HepG2 (cell line): ENCODE measurements at regions of chr15 and their contacts with region 1.

Region 1: GRCh38 chr15:82749951-82750830 is 40.5 kb upstream of the AP3B2 start:
- DNase-seq: peak; percentile 95
- ATAC-seq: peak; percentile 99
- H3K4me3 ChIP-seq: peak overlapping the region; percentile 80 to 87 (median 84)
- H3K27ac ChIP-seq: peak overlapping the region; percentile 89
- H3K4me1 ChIP-seq: peaks cover 38% of the 10 kb centered on the region
- H3K27me3 ChIP-seq: peaks cover 0 to 3% of the 10 kb centered on the region in 2 experiments; a peak in 1 of 5 replicates
- CTCF ChIP-seq: no peak
- EP300 ChIP-seq: 0 out of 4 replicates have a peak, but pooled peaks of 1 of the 2 experiments have one; percentile 2
- POLR2A ChIP-seq: peak; percentile 93 to 97
- RAD21 ChIP-seq: no peak; the same call in 1 of the 2 replicates

Region 2: DNA sequence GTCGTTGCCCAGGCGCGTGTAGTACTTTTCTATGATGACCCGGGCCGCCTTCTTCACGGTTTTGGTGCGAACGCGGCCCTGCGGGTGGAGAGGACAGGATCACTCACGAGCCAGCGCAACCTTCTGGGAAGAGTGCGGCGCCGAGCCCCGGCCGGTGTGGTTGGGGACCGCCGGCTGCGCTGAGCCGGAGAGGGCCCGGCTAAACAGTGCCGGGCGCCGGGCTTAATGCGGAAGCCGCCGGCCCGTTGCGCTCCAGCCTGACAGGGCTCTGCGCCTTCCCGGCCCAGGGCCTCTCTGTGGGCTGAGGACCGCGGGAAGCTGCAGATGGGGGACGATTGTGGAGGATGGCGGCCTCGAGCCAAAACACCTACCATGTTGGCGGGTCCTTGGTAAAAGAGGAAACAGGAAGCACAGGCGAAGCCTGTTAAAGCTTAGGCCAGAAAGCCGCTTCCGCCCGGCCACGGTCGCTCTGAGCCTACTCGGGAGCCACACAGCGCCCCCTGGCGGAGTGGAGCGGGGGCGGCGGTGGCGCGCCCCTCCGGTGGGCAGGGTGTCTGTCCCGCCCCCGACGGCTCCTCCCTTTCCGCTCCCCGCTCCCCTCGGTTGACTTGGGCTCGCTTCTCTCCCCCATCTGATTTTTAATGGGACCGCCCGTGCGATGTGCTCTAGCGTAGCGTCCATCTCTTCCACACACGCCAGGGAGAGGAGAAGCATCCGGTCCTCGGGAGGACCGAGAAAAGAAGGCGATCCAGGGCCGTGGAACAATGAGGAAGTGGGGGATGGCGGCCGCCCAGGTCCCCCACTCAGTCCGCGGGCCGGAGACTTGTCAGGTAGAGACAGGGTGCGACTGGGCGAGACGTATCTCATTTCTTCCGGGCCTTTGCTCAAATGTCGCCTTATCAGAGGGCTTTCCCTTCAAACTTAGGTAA is 209.9 kb before region 1 on chr15 and contains the start of gene RPS17:
- CTCF ChIA-PET with region 1: no interaction called
- POLR2A ChIA-PET with region 1: interaction called, 25 read pairs
- in situ Hi-C with region 1: no loop called
- intact Hi-C with region 1: loop called (anchors 1 kb)
- DNase-seq: peak; percentile 88
- ATAC-seq: peak; percentile 90
- H3K4me3 ChIP-seq: peak within 1 kb of the TSS; percentile 98 to 100 (median 98)
- H3K27ac ChIP-seq: peak within 1 kb of the TSS; percentile 90
- H3K4me1 ChIP-seq: peaks cover 41% of the 10 kb centered on the region
- H3K27me3 ChIP-seq: peaks cover 0 to 10% of the 10 kb centered on the region in 2 experiments; a peak in 1 of 5 replicates
- CTCF ChIP-seq: peak; percentile 98
- EP300 ChIP-seq: peak; percentile 21 to 44; a peak in 1 of 4 replicates
- POLR2A ChIP-seq: peak; percentile 95 to 99
- RAD21 ChIP-seq: peak; percentile 67
- total RNA-seq, gene RPS17: 2,570 and 3,054 TPM in 2 replicates

Region 3: GRCh38 chr15:82763361-82764116 is 13.3 kb after region 1 on chr15:
- CTCF ChIA-PET with region 1: no interaction called
- POLR2A ChIA-PET with region 1: interaction called, 22 read pairs
- in situ Hi-C with region 1: no loop called
- intact Hi-C with region 1: no loop called
- DNase-seq: peak; percentile 86
- ATAC-seq: peak; percentile 95
- H3K4me3 ChIP-seq: peak overlapping the region in 2 of 3 experiments; percentile 16 to 39; a peak in 3 of 6 replicates
- H3K27ac ChIP-seq: peak overlapping the region; percentile 63
- H3K4me1 ChIP-seq: peaks cover 43% of the 10 kb centered on the region
- H3K27me3 ChIP-seq: no peaks in the 10 kb centered on the region
- CTCF ChIP-seq: no peak
- EP300 ChIP-seq: peak in 1 of 2 experiments; percentile 64; a peak in 1 of 4 replicates
- POLR2A ChIP-seq: peak in 1 of 2 experiments; percentile 41; a peak in 1 of 4 replicates
- RAD21 ChIP-seq: no peak

Region 4: DNA sequence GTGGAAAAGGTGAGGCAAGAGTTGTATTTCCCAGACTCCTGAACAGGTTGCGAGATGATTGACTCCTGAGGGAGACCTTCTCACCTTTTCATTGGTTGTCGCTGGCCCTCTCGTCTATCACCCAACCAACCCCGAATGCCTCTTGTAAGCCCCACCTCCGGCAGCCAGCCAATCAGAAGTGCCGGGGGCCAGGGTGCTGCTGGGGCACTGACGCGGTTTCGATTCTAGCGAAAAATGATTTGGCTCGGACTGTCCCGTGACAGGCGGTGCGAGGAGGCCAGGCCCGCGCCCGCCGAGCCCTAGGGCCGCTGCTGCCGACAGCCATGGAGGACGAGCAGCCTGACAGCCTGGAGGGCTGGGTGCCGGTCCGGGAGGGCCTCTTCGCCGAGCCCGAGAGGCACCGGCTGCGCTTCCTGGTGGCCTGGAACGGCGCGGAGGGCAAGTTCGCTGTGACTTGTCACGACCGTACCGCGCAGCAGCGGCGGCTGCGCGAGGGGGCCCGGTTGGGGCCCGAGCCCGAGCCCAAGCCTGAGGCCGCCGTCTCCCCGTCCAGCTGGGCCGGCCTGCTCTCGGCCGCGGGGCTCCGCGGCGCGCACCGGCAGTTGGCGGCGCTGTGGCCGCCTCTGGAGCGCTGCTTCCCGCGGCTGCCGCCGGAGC is 59.3 kb after region 1 on chr15 and contains the start of gene WHAMM:
- CTCF ChIA-PET with region 1: no interaction called
- POLR2A ChIA-PET with region 1: interaction called, 26 read pairs
- in situ Hi-C with region 1: no loop called
- intact Hi-C with region 1: loop called (anchors 2 kb)
- DNase-seq: peak; percentile 98
- ATAC-seq: peak; percentile 95
- H3K4me3 ChIP-seq: peak within 1 kb of the TSS; percentile 64 to 85 (median 84)
- H3K27ac ChIP-seq: peak within 1 kb of the TSS; percentile 97
- H3K4me1 ChIP-seq: peaks cover 31% of the 10 kb centered on the region
- H3K27me3 ChIP-seq: no peaks in the 10 kb centered on the region; a peak in 2 of 5 replicates
- CTCF ChIP-seq: peak; percentile 24
- EP300 ChIP-seq: no peak
- POLR2A ChIP-seq: peak; percentile 82 to 84
- RAD21 ChIP-seq: peak; percentile 35; the same call in 1 of the 2 replicates
- total RNA-seq, gene WHAMM: 2.7 and 2.9 TPM in 2 replicates

Region 5: GRCh38 chr15:82855286-82856100 is 105.3 kb after region 1 on chr15:
- CTCF ChIA-PET with region 1: no interaction called
- POLR2A ChIA-PET with region 1: interaction called, 10 read pairs
- in situ Hi-C with region 1: no loop called
- intact Hi-C with region 1: no loop called
- DNase-seq: no peak
- ATAC-seq: no peak
- H3K4me3 ChIP-seq: no peak overlapping the region
- H3K27ac ChIP-seq: peak overlapping the region; percentile 42
- H3K4me1 ChIP-seq: peaks cover 27% of the 10 kb centered on the region
- H3K27me3 ChIP-seq: no peaks in the 10 kb centered on the region; a peak in 1 of 5 replicates
- CTCF ChIP-seq: no peak
- EP300 ChIP-seq: no peak
- POLR2A ChIP-seq: no peak
- RAD21 ChIP-seq: no peak

Region 6: GRCh38 chr15:83011271-83012075 is 261.3 kb after region 1 on chr15 and contains the start of gene C15orf40:
- CTCF ChIA-PET with region 1: no interaction called
- POLR2A ChIA-PET with region 1: interaction called, 10 read pairs
- in situ Hi-C with region 1: no loop called
- intact Hi-C with region 1: loop called (anchors 5 kb)
- DNase-seq: peak; percentile 81
- ATAC-seq: peak; percentile 96
- H3K4me3 ChIP-seq: peak within 1 kb of the TSS; percentile 63 to 88 (median 66)
- H3K27ac ChIP-seq: peak within 1 kb of the TSS; percentile 63
- H3K4me1 ChIP-seq: peaks cover 33% of the 10 kb centered on the region
- H3K27me3 ChIP-seq: no peaks in the 10 kb centered on the region
- CTCF ChIP-seq: peak; percentile 96
- EP300 ChIP-seq: no peak
- POLR2A ChIP-seq: peak; percentile 77 to 86
- RAD21 ChIP-seq: peak; percentile 61
- total RNA-seq, gene C15orf40: 24.0 and 25.5 TPM in 2 replicates